ENCODE measurements at regions of chr3 and their contacts with region 1.

Region 1: GRCh38 chr3:127556565-127556964 is 34.0 kb downstream of the TPRA1 start:
- DNase-seq: no peak
- ATAC-seq: no peak
- H3K4me3 ChIP-seq: no peak overlapping the region
- H3K4me3 Mint-ChIP-seq: no peak overlapping the region
- H3K27ac ChIP-seq: no peak overlapping the region
- H3K27ac Mint-ChIP-seq: no peak overlapping the region
- H3K4me1 ChIP-seq: no peaks in the 10 kb centered on the region
- H3K4me1 Mint-ChIP-seq: peaks cover 3 to 11% (median 6%) of the 10 kb centered on the region in 3 donors
- H3K27me3 ChIP-seq: peaks cover 0 to 10% of the 10 kb centered on the region in 2 experiments
- H3K27me3 Mint-ChIP-seq: peaks cover 3 to 4% of the 10 kb centered on the region in 2 donors

Region 2: DNA sequence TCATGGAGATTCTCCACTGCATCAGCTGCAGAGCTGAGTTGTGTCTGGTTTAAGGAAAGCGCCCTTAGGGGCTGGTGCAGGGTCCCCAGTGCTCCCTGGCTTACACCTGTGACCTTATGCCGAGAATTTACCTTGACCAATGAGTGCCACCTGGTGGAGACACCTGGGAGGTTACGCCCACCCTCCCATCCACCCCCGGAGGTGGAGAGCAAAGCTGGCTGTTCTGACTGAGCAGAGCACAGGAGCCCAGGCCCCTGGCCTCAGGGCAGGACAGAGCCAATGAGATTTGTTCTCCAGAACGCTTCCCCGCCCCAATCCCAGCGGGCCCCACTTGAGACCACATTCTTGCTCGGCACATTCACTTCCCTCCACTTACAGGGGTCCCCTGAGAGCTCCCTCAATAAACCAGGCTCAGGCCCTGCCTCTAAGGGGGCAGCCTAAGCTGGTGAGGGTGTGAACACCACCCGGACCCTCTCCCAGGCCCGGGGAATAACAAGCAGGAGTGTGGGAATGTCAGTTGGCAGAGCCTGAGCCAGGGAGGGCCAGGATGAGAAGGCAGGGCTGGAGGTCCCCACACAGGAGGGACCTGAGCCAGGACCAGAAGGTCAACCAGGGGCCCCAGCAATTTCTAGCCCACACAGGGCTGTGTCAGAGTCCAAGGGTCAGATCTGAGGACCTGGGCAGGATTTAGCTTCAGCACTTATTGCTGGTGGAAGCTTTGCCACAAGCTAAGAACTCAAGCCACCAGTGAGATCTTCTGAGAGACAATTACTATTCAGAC is 83.1 kb before region 1 on chr3:
- CTCF ChIA-PET with region 1: no interaction called
- POLR2A ChIA-PET with region 1: no interaction called
- DNase-seq: peak in 1 of 35 experiments; percentile 5
- ATAC-seq: no peak
- H3K4me3 ChIP-seq: no peak overlapping the region
- H3K4me3 Mint-ChIP-seq: no peak overlapping the region
- H3K27ac ChIP-seq: no peak overlapping the region
- H3K27ac Mint-ChIP-seq: no peak overlapping the region
- H3K4me1 ChIP-seq: no peaks in the 10 kb centered on the region
- H3K4me1 Mint-ChIP-seq: no peaks in the 10 kb centered on the region
- H3K27me3 ChIP-seq: peaks cover 0 to 31% of the 10 kb centered on the region in 2 experiments
- H3K27me3 Mint-ChIP-seq: peaks cover 6 to 15% of the 10 kb centered on the region in 2 donors

Region 3: DNA sequence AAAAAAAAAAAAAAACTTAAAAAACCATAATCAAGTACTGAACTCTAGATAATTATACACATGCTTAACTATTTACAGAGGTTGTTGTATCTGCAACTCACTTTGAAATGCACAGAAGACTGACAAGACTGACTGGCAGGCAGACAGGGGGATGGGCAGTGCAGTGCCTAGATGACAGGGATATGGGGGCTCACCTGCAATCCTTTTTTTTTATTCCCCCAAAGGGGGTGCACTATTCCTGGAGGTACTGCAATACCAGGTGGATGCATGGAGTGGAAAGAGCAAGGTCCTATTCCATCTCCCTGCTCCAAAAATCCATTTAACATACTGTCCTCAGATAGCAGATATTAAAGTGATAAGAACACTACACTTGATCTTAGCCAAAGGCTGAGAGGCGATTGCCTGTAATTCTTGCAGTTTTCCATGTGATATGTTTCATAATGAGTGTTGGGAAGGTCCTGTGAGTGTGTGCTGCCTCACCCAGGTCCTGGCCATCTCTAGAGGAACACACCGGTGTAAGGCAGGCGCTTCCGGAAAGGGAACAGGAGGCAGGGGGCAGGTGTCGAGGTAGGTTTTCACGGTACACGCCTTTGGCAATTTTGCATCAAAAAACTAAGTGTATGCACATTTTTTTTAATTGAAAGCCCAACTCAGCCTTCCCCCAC is 518.4 kb after region 1 on chr3:
- CTCF ChIA-PET with region 1: interaction called in 1 of 2 experiments, 12 read pairs
- POLR2A ChIA-PET with region 1: no interaction called
- DNase-seq: no peak
- ATAC-seq: peak in 1 of 4 experiments; percentile 5
- H3K4me3 ChIP-seq: no peak overlapping the region
- H3K4me3 Mint-ChIP-seq: peak overlapping the region; percentile 39 to 80 (median 71)
- H3K27ac ChIP-seq: no peak overlapping the region
- H3K27ac Mint-ChIP-seq: peak overlapping the region in 1 of 2 donors; percentile 39
- H3K4me1 ChIP-seq: peaks cover 3 to 23% of the 10 kb centered on the region in 2 experiments
- H3K4me1 Mint-ChIP-seq: peaks cover 0 to 14% (median 10%) of the 10 kb centered on the region in 3 donors
- H3K27me3 ChIP-seq: peaks cover 0 to 22% of the 10 kb centered on the region in 2 experiments
- H3K27me3 Mint-ChIP-seq: no peaks in the 10 kb centered on the region